ENCODE measurements at regions of chr10 and their contacts with region 1.

Region 1: DNA sequence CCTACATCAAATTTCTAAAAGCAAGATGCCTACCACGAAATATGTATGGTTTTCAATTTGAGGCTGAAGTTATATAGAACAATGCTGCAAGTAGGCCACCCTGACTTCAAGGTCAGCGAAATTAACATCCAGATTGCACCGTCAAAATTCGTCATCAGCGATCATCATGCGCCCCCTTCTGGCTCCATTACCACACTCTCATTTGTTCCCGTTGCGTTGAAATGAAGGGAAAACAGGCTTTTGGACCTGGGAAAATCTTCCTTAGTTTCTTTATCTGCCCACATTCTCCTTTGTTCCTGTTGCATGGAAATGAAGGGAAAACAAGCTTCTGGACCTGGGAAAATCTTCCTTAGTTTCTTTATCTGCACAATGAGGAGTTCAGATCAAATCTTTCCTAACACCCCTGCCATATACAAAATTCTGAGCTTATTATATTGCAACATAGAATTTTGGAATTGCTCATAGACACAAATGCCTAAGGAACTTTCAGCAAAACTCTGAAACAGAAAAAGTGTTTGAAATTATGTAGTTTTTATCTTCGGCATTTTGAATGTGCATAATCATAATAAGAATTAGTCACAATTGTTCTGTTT is 98.2 kb upstream of the PRKCQ start:
- DNase-seq: peak; percentile 76
- H3K4me3 Mint-ChIP-seq: no peak overlapping the region
- H3K27ac Mint-ChIP-seq: no peak overlapping the region
- H3K4me1 Mint-ChIP-seq: peaks cover 4% of the 10 kb centered on the region
- H3K27me3 Mint-ChIP-seq: peaks cover 6% of the 10 kb centered on the region

Region 2: DNA sequence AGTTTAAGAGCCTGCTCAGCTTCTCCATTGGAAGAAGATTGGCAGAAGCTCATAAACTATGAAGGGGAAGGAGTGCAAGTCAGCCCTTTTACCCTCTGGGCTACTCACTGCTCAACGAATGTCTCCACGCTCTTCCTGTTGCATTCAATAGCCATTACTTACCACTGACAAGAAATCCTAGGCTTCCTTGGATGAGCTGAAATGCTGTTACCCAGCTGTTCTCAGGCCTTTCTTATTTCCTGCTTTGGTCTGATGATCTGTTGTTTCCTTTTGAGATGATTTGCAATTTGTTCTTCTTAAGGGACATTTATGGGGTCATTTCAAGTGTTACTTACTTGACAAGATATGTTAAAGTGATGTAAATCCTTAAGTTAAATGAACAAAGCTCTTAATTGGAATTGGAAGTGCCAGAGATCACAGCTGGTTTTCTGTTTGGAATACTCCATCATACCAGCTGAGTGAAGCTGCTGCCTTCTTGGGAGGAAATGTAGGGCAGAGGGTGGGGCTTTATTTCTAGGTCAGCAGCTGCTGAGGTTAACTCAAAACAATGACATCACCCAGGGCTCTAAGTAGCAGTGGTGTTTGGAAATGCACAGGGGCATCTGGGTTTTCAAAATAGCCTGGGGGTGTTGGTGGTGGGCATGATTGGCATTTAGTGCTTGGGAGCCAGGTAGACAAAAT is 268.2 kb before region 1 on chr10:
- CTCF ChIA-PET with region 1: interaction called, 27 read pairs
- POLR2A ChIA-PET with region 1: interaction called, 6 read pairs
- intact Hi-C with region 1: no loop called
- DNase-seq: peak; percentile 55
- H3K4me3 Mint-ChIP-seq: peak overlapping the region; percentile 38
- H3K27ac Mint-ChIP-seq: peak overlapping the region; percentile 84
- H3K4me1 Mint-ChIP-seq: peaks cover 56% of the 10 kb centered on the region
- H3K27me3 Mint-ChIP-seq: no peaks in the 10 kb centered on the region

Region 3: DNA sequence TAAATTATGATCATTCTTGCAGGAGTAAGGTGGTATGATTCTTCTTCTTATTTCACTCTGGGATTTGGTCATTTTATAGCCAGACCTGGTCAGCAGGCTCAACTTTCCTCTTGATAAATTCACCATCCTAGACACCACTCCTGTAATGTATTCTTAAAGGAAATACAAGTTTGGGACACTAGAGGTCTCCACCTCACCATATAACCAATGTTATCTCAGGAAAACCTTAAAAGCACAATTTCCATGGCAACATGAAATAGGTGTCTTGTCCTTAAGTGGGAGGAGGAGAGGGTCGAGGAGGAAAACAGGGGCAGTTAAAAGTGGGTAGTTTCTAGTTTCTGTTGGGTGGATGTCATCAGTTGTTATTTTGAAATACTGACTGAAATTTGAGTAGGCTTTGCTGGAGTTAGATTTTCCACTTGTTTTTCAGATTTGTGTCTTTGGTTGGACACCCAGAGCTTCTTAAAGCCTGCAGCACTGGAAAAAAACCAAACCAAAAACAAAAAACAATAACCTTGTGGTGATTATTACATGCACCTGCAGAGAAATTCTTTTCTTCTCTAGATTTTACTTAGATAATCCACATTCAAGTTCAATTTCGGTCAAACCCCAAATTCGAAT is 261.3 kb before region 1 on chr10:
- CTCF ChIA-PET with region 1: interaction called, 27 read pairs
- POLR2A ChIA-PET with region 1: interaction called, 3 read pairs
- intact Hi-C with region 1: loop called (anchors 1 kb)
- DNase-seq: no peak
- H3K4me3 Mint-ChIP-seq: no peak overlapping the region
- H3K27ac Mint-ChIP-seq: no peak overlapping the region
- H3K4me1 Mint-ChIP-seq: no peaks in the 10 kb centered on the region
- H3K27me3 Mint-ChIP-seq: no peaks in the 10 kb centered on the region

Region 4: GRCh38 chr10:6748978-6749635 is 70.8 kb after region 1 on chr10:
- CTCF ChIA-PET with region 1: no interaction called
- POLR2A ChIA-PET with region 1: no interaction called
- intact Hi-C with region 1: no loop called
- DNase-seq: no peak
- H3K4me3 Mint-ChIP-seq: no peak overlapping the region
- H3K27ac Mint-ChIP-seq: no peak overlapping the region
- H3K4me1 Mint-ChIP-seq: no peaks in the 10 kb centered on the region
- H3K27me3 Mint-ChIP-seq: peaks cover 20% of the 10 kb centered on the region